ENCODE measurements at regions of chr17 and their contacts with region 1.

Region 1: GRCh38 chr17:74305865-74306654 is 20.0 kb upstream of the KIF19 start:
- DNase-seq: no peak
- ATAC-seq: no peak

Region 2: DNA sequence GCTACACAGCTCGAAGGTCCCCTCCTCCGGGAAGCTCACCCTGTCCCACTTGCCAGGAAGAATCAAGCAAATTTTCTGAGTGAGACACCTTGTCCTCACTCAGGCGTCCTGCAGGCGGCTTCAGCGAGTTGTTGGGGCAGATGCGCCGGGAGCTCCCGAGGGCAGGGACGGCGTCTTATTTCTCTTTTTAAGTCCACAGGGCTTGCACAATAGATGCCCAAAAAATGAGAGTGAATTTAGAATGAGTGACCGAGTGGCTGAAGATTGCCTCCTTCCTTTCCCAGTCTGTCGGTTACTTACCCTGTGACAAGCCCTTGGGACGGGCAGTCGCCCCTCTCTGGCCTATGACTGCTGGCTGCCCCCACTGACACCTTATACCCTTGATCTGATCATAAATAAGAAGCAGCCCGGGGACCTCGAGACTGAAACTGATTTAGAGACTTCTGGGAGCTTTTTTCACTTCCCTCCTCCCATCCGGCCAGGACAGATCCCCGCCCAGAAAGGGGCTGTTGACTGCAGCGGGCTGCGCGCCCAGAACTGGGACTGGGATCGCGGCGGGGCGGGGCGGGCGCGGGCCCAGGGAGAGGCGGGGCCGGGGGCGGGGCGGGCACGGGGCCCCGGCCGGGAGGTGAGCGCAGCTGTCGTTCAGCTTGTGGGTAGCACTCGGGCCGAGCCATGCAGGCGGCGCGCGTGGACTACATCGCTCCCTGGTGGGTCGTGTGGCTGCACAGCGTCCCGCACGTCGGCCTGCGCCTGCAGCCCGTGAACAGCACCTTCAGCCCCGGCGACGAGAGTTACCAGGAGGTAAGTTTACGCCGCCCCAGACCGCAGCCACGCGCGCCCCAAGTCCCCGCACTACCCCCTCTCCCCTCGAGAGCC is 92.9 kb before region 1 on chr17 and contains the start of gene TTYH2:
- intact Hi-C with region 1: loop called (anchors 5 kb)
- DNase-seq: peak; percentile 94
- ATAC-seq: peak; percentile 83
- total RNA-seq, gene TTYH2: 42.6 TPM

Region 3: GRCh38 chr17:74354123-74354522 is 48.1 kb after region 1 on chr17:
- intact Hi-C with region 1: loop called (anchors 10 kb)
- DNase-seq: peak; percentile 71
- ATAC-seq: peak; percentile 70

Region 4: DNA sequence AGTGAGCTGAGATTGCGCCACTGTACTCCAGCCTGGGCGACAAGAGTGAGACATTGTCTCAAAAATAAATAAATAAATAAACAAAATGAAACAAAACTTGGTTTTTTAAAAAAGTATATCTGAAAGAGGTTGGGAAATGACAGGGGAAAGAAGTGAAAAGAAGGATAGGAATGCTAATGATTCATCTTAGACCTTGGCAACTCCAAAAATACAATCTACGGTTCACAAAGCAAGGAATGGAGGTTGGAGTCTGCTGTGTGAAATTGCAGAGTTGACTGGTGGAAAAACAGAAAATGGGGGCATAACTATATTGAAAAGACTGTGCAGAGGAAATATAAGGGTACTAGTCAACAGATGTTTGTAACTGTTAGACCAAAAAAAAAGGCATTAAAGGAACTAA is 357.5 kb after region 1 on chr17:
- intact Hi-C with region 1: no loop called
- DNase-seq: no peak
- ATAC-seq: no peak